SK-N-SH (cell line): ENCODE measurements at regions of chr11 and their contacts with region 1.

Region 1: GRCh38 chr11:118145285-118146227 is 7.1 kb downstream of the SCN4B start:
- DNase-seq: peak; percentile 95
- H3K4me3 ChIP-seq: peak overlapping the region; percentile 61 to 89
- H3K27ac ChIP-seq: no peak overlapping the region
- H3K4me1 ChIP-seq: peaks cover 0 to 4% of the 10 kb centered on the region in 2 experiments; a peak in 1 of 4 replicates
- H3K27me3 ChIP-seq: peaks cover 19% of the 10 kb centered on the region; the same call in 1 of the 2 replicates
- CTCF ChIP-seq: peak; percentile 91
- EP300 ChIP-seq: no peak
- RAD21 ChIP-seq: peak; percentile 97

Region 2: DNA sequence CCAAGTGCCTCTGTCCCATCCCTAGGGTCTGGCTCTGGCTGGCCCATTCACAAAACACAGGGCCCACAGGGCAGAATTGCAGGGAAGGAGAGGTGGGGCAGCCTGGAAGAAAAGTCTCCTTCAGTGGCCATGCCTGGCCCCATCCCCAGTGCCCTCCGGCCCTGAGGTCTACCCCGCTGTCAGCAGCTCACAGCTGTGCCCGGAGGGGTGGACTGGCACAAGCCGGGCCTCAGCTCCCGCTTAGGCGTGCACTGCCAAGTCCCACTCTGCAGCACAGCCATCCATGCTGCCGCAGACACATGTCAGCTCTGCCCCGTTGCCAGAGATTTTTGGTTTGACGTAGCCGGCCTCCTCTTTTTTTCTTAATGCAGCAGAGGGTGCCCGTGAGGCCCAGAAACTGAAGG is 34.7 kb after region 1 on chr11:
- CTCF ChIA-PET with region 1: interaction called, 10 read pairs
- POLR2A ChIA-PET with region 1: no interaction called
- DNase-seq: peak; percentile 78
- H3K4me3 ChIP-seq: no peak overlapping the region
- H3K27ac ChIP-seq: no peak overlapping the region
- H3K4me1 ChIP-seq: peaks cover 0 to 14% of the 10 kb centered on the region in 2 experiments; a peak in 1 of 4 replicates
- H3K27me3 ChIP-seq: peaks cover 23% of the 10 kb centered on the region
- CTCF ChIP-seq: no peak
- EP300 ChIP-seq: 0 out of 4 replicates have a peak, but pooled peaks of 1 of the 2 experiments have one; percentile 16
- RAD21 ChIP-seq: no peak

Region 3: GRCh38 chr11:118325283-118325682 is 179.7 kb after region 1 on chr11:
- CTCF ChIA-PET with region 1: no interaction called
- POLR2A ChIA-PET with region 1: no interaction called
- DNase-seq: no peak
- H3K4me3 ChIP-seq: no peak overlapping the region
- H3K27ac ChIP-seq: no peak overlapping the region
- H3K4me1 ChIP-seq: no peaks in the 10 kb centered on the region
- H3K27me3 ChIP-seq: peaks cover 8% of the 10 kb centered on the region; the same call in 1 of the 2 replicates
- CTCF ChIP-seq: no peak
- EP300 ChIP-seq: no peak
- RAD21 ChIP-seq: no peak